ENCODE measurements at regions of chr19 and their contacts with region 1.

Region 1: GRCh38 chr19:39428283-39429112 is 7.3 kb downstream of the RPS16 start:
- DNase-seq: peak in 1 of 2 experiments; percentile 88
- H3K4me3 ChIP-seq: peak overlapping the region in 3 of 4 experiments; percentile 18 to 34 (median 32); a peak in 3 of 8 replicates
- H3K27ac ChIP-seq: peak overlapping the region; percentile 86
- H3K4me1 ChIP-seq: peaks cover 5 to 18% (median 13%) of the 10 kb centered on the region in 4 experiments
- H3K27me3 ChIP-seq: no peaks in the 10 kb centered on the region; a peak in 1 of 7 replicates
- CTCF ChIP-seq: no peak
- EP300 ChIP-seq: peak in 1 of 2 experiments; percentile 92; a peak in 1 of 3 replicates
- POLR2A ChIP-seq: peak; percentile 40 to 80; a peak in 2 of 3 replicates
- RAD21 ChIP-seq: peak in 1 of 2 experiments; percentile 3; a peak in 1 of 4 replicates

Region 2: GRCh38 chr19:39397360-39398296 is 30.9 kb before region 1 on chr19:
- CTCF ChIA-PET with region 1: interaction called, 5 read pairs
- POLR2A ChIA-PET with region 1: interaction called, 182 read pairs
- DNase-seq: peak in 1 of 2 experiments; percentile 95
- H3K4me3 ChIP-seq: no peak overlapping the region
- H3K27ac ChIP-seq: no peak overlapping the region
- H3K4me1 ChIP-seq: peaks cover 6 to 21% (median 13%) of the 10 kb centered on the region in 4 experiments
- H3K27me3 ChIP-seq: no peaks in the 10 kb centered on the region
- CTCF ChIP-seq: peak; percentile 92 to 98 (median 98)
- EP300 ChIP-seq: no peak
- POLR2A ChIP-seq: no peak; a peak in 1 of 3 replicates
- RAD21 ChIP-seq: peak; percentile 92 to 96

Region 3: GRCh38 chr19:39417463-39418181 is 10.9 kb before region 1 on chr19:
- CTCF ChIA-PET with region 1: interaction called, 16 read pairs
- POLR2A ChIA-PET with region 1: interaction called, 1,154 read pairs
- DNase-seq: no peak
- H3K4me3 ChIP-seq: no peak overlapping the region
- H3K27ac ChIP-seq: no peak overlapping the region
- H3K4me1 ChIP-seq: peaks cover 0 to 14% (median 6%) of the 10 kb centered on the region in 4 experiments; a peak in 5 of 7 replicates
- H3K27me3 ChIP-seq: no peaks in the 10 kb centered on the region
- CTCF ChIP-seq: no peak
- EP300 ChIP-seq: no peak
- POLR2A ChIP-seq: no peak
- RAD21 ChIP-seq: no peak

Region 4: DNA sequence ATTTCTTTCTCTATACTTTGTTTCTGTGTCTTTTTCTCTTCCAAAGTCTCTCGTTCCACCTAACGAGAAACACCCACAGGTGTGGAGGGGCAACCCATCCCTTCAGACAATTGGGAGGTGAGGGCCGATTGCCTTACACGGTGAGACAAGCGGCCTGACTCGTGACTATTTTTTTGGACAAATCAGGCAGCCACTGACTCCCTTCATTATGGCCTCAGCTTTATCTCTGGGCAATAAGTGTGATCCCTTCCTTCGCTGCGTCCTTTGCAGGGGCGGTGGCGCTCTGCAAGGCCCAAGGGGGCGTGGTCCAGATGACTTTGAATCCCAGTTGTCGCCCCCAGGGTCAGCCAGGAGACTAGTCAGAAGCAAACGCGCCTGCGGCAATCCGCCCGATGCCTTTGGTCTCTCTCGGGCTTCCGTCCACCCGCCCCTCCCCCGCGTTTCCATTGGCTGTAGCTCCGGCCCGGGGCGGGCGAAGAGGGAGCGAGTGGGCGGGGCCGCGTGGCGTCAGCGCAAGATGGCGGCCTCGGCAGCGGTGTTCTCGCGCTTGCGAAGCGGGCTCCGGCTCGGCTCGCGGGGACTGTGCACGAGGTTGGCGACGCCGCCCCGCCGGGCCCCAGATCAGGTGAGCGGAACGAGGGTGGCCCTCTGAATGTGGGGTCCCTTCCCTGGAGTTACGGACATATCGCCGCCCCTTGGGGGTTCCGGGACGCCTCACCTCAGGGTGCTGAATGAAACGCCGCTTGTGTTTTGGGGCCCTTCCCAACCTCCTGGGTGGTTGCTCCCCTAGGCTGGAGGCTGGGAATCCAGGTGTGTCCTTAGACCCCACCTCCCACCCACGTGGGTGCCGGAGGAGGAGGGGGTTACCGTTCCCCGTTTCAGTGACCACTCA is 52.1 kb after region 1 on chr19 and contains the start of gene TIMM50:
- CTCF ChIA-PET with region 1: interaction called, 14 read pairs
- POLR2A ChIA-PET with region 1: interaction called, 20 read pairs
- DNase-seq: peak; percentile 97 to 98
- H3K4me3 ChIP-seq: peak within 1 kb of the TSS; percentile 89 to 98 (median 95)
- H3K27ac ChIP-seq: peak within 1 kb of the TSS; percentile 93
- H3K4me1 ChIP-seq: peaks cover 0 to 10% (median 4%) of the 10 kb centered on the region in 4 experiments; a peak in 5 of 7 replicates
- H3K27me3 ChIP-seq: no peaks in the 10 kb centered on the region
- CTCF ChIP-seq: no peak
- EP300 ChIP-seq: no peak; a peak in 1 of 3 replicates
- POLR2A ChIP-seq: peak; percentile 74 to 84
- RAD21 ChIP-seq: no peak; a peak in 1 of 4 replicates
- total RNA-seq, gene TIMM50: 153 and 155 TPM in 2 replicates